HEK293T (cell line): ENCODE measurements at regions of chr10 and their contacts with region 1.

Region 1: DNA sequence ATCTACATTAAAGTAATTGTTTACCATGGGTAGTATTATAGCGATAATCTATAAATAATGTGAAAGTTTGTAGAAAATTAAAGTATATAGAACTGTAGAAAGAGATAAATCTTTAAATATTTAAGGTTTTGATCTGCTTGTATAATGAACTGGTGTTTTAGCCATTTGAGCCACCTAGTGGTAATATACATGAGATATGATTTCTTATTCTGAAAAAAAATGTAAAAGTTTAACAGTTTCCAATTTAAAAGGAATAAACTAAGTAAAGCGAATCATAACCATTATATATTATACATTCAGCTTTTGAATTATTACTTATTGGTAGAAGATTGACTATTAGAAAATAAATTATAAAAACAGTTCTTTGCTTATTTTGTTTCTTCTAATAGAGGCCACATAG is 91.2 kb downstream of the OTUD1 start:
- DNase-seq: no peak

Region 2: GRCh38 chr10:23314835-23315239 is 215.2 kb before region 1 on chr10:
- CTCF ChIA-PET with region 1: interaction called, 10 read pairs
- POLR2A ChIA-PET with region 1: no interaction called
- DNase-seq: peak; percentile 30